Mammary epithelial cell (primary cell): ENCODE measurements at regions of chr16 and their contacts with region 1.

Region 1: DNA sequence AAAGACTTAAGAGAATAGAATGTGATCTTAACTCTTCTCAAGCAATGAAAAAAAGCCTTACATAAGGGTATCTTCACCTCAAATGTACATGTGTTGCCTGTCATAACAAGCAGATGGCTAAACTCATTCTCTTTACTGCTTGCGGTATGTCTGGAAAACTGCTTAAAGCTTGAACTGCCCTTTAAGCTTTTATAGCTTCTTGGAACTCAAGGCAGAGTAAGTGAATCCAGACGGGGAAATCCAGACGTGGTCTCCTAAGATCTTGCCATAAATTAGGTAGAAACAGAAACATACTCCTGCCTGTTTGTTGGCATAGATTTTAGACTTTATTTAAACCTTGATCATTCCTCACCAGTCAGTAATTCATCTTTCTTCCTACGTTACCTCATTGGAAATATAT is 19.6 kb downstream of the CLUAP1 start:
- DNase-seq: no peak
- H3K4me3 ChIP-seq: no peak overlapping the region
- H3K27ac ChIP-seq: no peak overlapping the region
- H3K4me1 ChIP-seq: no peaks in the 10 kb centered on the region
- H3K27me3 ChIP-seq: no peaks in the 10 kb centered on the region
- CTCF ChIP-seq: no peak

Region 2: DNA sequence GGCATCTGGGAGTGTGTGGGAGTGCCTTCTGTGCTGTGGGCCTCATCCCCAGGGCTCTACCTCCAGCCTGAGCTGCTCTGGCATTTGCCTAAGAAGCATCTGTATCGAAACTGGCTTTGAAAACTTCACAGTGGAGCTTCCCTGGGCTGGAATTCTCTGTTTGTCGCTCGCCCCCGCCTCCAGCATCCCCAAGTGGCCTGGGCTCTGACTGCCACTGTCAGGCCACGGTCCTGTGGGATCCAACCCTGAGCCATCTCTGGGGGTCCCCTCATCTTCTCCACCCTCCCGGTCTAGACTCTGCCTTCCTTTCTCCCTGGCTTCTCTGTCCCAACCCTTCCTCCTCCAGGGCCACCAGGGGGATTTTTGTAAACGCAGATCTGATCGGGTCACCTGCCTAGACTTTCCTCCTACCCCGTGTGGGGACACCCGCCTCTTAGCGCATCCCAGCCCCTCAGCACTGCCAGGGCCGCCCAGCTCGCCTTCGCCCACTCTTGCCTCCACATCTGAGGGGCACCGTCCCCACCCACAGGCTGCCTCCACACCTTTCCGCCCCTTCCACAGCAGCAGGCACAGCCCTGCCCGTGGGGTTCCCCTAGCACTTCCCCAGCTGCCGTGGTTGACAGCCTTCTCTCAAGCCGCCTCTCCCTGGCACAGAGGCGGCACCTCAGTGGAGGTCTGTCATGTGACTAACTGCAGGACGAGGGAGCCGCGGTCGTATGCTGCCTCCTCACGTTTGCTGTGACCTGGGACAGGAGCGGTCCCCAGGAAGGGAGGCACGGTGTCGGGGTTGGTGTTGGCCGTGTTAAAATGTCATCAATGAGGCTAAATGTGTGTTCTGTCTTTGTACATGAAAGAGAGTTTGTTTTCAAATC is 1033.5 kb before region 1 on chr16:
- CTCF ChIA-PET with region 1: no interaction called
- dilution Hi-C with region 1: no loop called
- in situ Hi-C with region 1: no loop called
- intact Hi-C with region 1: no loop called
- DNase-seq: no peak
- H3K4me3 ChIP-seq: no peak overlapping the region
- H3K27ac ChIP-seq: no peak overlapping the region
- H3K4me1 ChIP-seq: peaks cover 33% of the 10 kb centered on the region
- H3K27me3 ChIP-seq: no peaks in the 10 kb centered on the region
- CTCF ChIP-seq: peak in 1 of 2 donors; percentile 43

Region 3: DNA sequence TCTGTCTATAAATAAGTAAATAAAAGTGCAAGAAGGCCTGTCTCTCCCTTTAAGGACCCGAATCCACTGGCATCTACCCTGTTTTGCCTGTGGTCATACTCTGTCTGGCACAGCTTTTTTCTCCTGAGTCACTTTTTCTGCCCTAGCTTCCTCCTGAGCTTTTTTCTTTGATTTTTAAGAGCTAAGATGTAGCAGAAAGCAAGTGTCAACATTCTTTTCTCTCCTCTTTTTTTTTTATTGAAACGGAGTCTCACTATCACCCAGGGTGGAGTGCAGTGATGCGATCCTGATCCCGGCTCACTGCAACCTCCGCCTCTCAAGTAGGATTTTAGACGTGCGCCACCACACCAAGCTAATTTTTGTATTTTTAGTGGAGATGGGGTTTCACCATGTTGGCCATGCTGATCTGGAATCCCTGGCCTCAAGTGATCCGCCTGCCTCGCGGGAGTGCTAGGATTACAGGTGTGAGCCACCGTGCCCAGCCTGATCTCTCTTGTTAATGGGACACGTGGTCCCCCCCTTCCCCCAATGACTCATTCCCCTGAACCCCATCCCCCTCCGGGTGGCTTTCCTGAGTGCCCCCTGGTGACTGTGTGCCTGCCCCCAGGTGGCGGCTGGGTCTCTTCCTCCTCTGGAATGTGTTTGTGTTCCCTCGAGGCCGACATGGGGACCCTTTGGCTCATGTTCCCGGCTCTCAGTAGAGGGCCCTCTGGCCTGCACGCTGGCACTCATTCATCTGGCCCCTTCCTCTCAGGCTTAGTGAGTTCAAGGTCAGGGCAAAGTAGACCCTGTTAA is 39.3 kb before region 1 on chr16:
- CTCF ChIA-PET with region 1: no interaction called
- dilution Hi-C with region 1: no loop called
- in situ Hi-C with region 1: no loop called
- intact Hi-C with region 1: no loop called
- DNase-seq: no peak
- H3K4me3 ChIP-seq: no peak overlapping the region
- H3K27ac ChIP-seq: no peak overlapping the region
- H3K4me1 ChIP-seq: no peaks in the 10 kb centered on the region
- H3K27me3 ChIP-seq: no peaks in the 10 kb centered on the region
- CTCF ChIP-seq: no peak

Region 4: DNA sequence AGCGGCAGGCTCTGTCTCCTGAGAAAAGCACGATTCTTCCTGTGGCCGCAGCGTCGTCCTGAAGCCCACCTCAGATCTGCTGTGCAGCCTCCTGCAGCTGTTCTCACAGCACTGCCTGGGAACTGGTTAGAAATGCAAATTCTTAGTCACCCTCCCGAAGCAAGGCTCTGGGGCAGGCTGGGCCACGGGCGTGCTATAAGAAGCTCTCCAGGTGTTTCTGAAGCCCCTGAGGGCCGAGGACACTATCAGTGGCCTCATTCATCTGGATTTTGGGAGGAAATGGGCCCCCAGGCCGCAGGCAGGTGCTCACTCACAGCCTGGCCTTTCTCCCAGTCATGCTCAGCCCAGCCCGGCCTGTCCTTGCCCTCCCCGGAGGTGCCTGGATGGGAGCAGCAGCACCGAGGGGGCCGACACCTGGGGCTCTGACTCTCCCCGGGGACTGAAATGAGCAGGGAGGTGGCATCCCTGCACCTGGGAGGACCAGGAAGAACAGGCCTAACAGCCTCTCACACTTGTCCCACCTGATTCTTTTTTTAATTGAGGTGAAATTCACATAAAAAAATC is 67.2 kb after region 1 on chr16:
- CTCF ChIA-PET with region 1: no interaction called
- dilution Hi-C with region 1: loop called (anchors 5 kb)
- in situ Hi-C with region 1: no loop called
- intact Hi-C with region 1: no loop called
- DNase-seq: no peak
- H3K4me3 ChIP-seq: no peak overlapping the region
- H3K27ac ChIP-seq: no peak overlapping the region
- H3K4me1 ChIP-seq: no peaks in the 10 kb centered on the region
- H3K27me3 ChIP-seq: no peaks in the 10 kb centered on the region
- CTCF ChIP-seq: no peak

Region 5: DNA sequence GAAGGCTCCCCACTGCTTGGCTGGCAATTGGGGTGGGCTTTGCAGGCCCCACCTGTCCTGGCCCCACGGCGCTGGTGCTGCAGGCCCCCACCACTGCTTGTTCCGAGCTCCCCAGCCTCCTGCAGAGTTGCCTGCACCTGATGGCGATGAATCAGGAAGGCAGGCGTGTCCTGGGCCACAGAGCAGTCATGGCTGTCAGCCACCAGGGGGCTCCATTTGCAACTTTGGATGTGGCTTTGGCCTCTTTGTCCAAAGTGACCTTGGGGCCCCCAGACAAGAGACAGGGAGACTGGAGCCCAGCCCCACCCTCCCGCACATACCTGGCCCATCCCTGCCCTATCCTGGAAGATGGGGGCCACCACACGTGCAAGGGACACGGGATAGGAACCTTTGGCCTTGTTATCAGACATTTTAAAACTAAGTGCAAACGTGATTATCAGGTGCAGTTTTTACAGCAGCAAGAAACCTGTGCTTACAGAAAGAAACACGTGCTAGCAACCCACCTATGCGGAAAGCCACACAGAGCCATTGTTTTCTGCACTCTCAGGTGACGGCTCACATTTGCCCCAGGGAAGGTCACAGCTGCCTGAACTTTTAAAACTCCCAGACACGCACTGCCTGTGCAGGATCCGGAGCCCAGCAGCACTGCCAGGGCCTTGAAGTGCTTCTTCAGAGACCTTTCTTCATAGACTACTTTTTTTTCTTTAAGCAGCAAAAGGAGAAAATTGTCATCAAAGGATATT is 134.0 kb after region 1 on chr16 and contains the start of gene DNASE1:
- CTCF ChIA-PET with region 1: no interaction called
- dilution Hi-C with region 1: no loop called
- in situ Hi-C with region 1: no loop called
- intact Hi-C with region 1: loop called (anchors 10 kb)
- DNase-seq: peak; percentile 40
- H3K4me3 ChIP-seq: no peak within 1 kb of the TSS
- H3K27ac ChIP-seq: no peak within 1 kb of the TSS
- H3K4me1 ChIP-seq: no peaks in the 10 kb centered on the region
- H3K27me3 ChIP-seq: no peaks in the 10 kb centered on the region
- CTCF ChIP-seq: peak; percentile 74 to 76
- total RNA-seq, gene DNASE1: 11.1 to 13.8 TPM